ENCODE measurements at regions of chr15 and their contacts with region 1.

Region 1: GRCh38 chr15:75842722-75843551 is at the start of gene UBE2Q2:
- DNase-seq: peak; percentile 88
- total RNA-seq, gene UBE2Q2: 38.3 TPM

Region 2: GRCh38 chr15:75903331-75904239 is 60.6 kb after region 1 on chr15 and contains the start of gene FBXO22:
- intact Hi-C with region 1: loop called (anchors 2 kb)
- DNase-seq: peak; percentile 95
- total RNA-seq, gene FBXO22: 19.1 TPM

Measured in cardiac septum (tissue), 1 donor.